ENCODE measurements at regions of chr1 and their contacts with region 1.

Region 1: GRCh38 chr1:175319418-175320230 is 127.0 kb upstream of the KIAA0040 start:
- DNase-seq: peak; percentile 21 to 73
- H3K4me3 ChIP-seq: no peak overlapping the region
- H3K27ac ChIP-seq: no peak overlapping the region
- H3K4me1 ChIP-seq: no peaks in the 10 kb centered on the region
- H3K27me3 ChIP-seq: no peaks in the 10 kb centered on the region
- CTCF ChIP-seq: peak; percentile 89 to 96 (median 95)
- EP300 ChIP-seq: no peak
- POLR2A ChIP-seq: no peak
- RAD21 ChIP-seq: peak; percentile 90 to 91

Region 2: DNA sequence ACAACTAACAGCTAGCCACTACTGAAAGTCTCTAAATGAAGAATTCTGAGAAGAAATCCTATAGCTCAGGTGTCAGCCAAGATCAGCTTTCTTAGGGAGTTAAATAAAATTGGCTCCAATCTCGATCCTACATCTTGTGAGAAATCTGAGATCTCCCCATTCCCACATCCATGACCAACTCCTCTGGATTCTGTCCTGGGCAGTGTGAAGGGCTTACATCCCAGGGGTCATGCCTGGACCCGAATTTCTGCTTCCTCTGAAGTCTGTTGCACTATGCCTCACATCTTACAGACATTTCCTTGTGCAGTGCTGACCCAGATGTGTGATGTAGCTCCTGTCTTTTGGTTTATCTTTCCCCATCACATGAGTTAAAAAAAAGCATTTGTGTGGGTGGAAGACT is 256.8 kb before region 1 on chr1:
- CTCF ChIA-PET with region 1: no interaction called
- POLR2A ChIA-PET with region 1: no interaction called
- DNase-seq: no peak
- H3K4me3 ChIP-seq: no peak overlapping the region
- H3K27ac ChIP-seq: no peak overlapping the region
- H3K4me1 ChIP-seq: no peaks in the 10 kb centered on the region
- H3K27me3 ChIP-seq: no peaks in the 10 kb centered on the region
- CTCF ChIP-seq: no peak
- EP300 ChIP-seq: no peak
- POLR2A ChIP-seq: no peak
- RAD21 ChIP-seq: no peak

Region 3: GRCh38 chr1:175146529-175147213 is 173.0 kb before region 1 on chr1:
- CTCF ChIA-PET with region 1: interaction called, 260 read pairs
- POLR2A ChIA-PET with region 1: no interaction called
- DNase-seq: peak; percentile 61 to 95
- H3K4me3 ChIP-seq: peak overlapping the region in 1 of 4 experiments; percentile 34; a peak in 1 of 8 replicates
- H3K27ac ChIP-seq: no peak overlapping the region
- H3K4me1 ChIP-seq: peaks cover 0 to 4% (median 2%) of the 10 kb centered on the region in 4 experiments; a peak in 3 of 7 replicates
- H3K27me3 ChIP-seq: peaks cover 0 to 2% (median 0%) of the 10 kb centered on the region in 4 experiments; a peak in 3 of 7 replicates
- CTCF ChIP-seq: peak; percentile 87 to 95 (median 91)
- EP300 ChIP-seq: 0 out of 3 replicates have a peak, but pooled peaks of 1 of the 2 experiments have one; percentile 3
- POLR2A ChIP-seq: no peak
- RAD21 ChIP-seq: peak; percentile 45 to 62

Region 4: GRCh38 chr1:175208773-175209492 is 110.7 kb before region 1 on chr1:
- CTCF ChIA-PET with region 1: interaction called, 10 read pairs
- POLR2A ChIA-PET with region 1: no interaction called
- DNase-seq: no peak
- H3K4me3 ChIP-seq: no peak overlapping the region
- H3K27ac ChIP-seq: no peak overlapping the region
- H3K4me1 ChIP-seq: no peaks in the 10 kb centered on the region
- H3K27me3 ChIP-seq: no peaks in the 10 kb centered on the region
- CTCF ChIP-seq: no peak
- EP300 ChIP-seq: no peak
- POLR2A ChIP-seq: no peak
- RAD21 ChIP-seq: no peak

Region 5: GRCh38 chr1:175267716-175268384 is 51.8 kb before region 1 on chr1:
- CTCF ChIA-PET with region 1: interaction called, 22 read pairs
- POLR2A ChIA-PET with region 1: no interaction called
- DNase-seq: no peak
- H3K4me3 ChIP-seq: no peak overlapping the region
- H3K27ac ChIP-seq: no peak overlapping the region
- H3K4me1 ChIP-seq: peaks cover 0 to 3% (median 0%) of the 10 kb centered on the region in 4 experiments; a peak in 1 of 7 replicates
- H3K27me3 ChIP-seq: no peaks in the 10 kb centered on the region
- CTCF ChIP-seq: no peak
- EP300 ChIP-seq: no peak
- POLR2A ChIP-seq: no peak
- RAD21 ChIP-seq: no peak

Region 6: GRCh38 chr1:175307160-175307559 is 12.5 kb before region 1 on chr1:
- CTCF ChIA-PET with region 1: interaction called, 78 read pairs
- POLR2A ChIA-PET with region 1: no interaction called
- DNase-seq: no peak
- H3K4me3 ChIP-seq: no peak overlapping the region
- H3K27ac ChIP-seq: no peak overlapping the region
- H3K4me1 ChIP-seq: peaks cover 0 to 3% (median 0%) of the 10 kb centered on the region in 4 experiments; a peak in 1 of 7 replicates
- H3K27me3 ChIP-seq: no peaks in the 10 kb centered on the region
- CTCF ChIP-seq: no peak
- EP300 ChIP-seq: no peak
- POLR2A ChIP-seq: no peak
- RAD21 ChIP-seq: no peak

Region 7: DNA sequence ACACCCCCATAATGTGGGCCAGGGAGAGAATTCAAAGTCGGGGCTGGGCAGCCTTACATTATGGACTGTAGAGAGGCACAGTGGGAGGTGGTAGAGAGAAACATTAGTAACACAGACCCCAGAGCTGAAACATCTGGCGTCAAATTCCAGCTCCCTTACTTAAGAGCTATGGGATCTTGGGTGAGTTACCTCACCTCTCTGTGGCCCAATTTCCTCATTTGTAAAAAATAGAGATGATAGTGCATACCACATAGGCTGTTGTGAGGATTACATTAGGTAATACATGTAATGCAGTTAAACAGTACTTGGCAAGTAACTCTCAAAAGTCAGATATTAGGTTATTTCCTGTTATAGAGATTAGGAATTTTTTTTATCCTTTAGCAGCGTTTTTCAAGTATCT is 33.4 kb after region 1 on chr1:
- CTCF ChIA-PET with region 1: interaction called, 41 read pairs
- POLR2A ChIA-PET with region 1: no interaction called
- DNase-seq: no peak
- H3K4me3 ChIP-seq: no peak overlapping the region
- H3K27ac ChIP-seq: no peak overlapping the region
- H3K4me1 ChIP-seq: no peaks in the 10 kb centered on the region
- H3K27me3 ChIP-seq: no peaks in the 10 kb centered on the region
- CTCF ChIP-seq: no peak
- EP300 ChIP-seq: no peak
- POLR2A ChIP-seq: no peak
- RAD21 ChIP-seq: no peak

Region 8: DNA sequence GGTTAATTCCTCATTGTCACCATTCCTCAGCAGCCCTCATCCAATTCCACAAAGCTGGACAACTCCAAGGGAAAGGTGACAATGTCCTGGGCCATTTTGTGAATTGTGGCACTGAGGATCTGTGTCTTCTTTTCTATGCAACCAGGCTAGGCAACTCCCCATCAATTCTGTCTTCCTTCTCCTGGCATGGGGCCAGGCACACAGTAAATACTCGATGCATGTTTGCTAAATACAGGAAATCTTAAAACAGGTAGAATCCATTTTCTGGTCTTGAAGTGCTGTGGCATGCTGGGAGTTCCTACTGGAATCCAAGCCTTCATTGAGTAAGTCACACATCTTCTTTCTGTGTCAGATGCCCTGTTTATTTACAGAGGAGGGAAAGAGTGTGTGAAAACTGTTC is 324.9 kb after region 1 on chr1:
- CTCF ChIA-PET with region 1: no interaction called
- POLR2A ChIA-PET with region 1: no interaction called
- DNase-seq: no peak
- H3K4me3 ChIP-seq: no peak overlapping the region
- H3K27ac ChIP-seq: no peak overlapping the region
- H3K4me1 ChIP-seq: no peaks in the 10 kb centered on the region
- H3K27me3 ChIP-seq: no peaks in the 10 kb centered on the region
- CTCF ChIP-seq: no peak
- EP300 ChIP-seq: no peak
- POLR2A ChIP-seq: no peak
- RAD21 ChIP-seq: no peak

Measured in H1 (cell line).